ENCODE measurements at regions of chr10 and their contacts with region 1.

Region 1: DNA sequence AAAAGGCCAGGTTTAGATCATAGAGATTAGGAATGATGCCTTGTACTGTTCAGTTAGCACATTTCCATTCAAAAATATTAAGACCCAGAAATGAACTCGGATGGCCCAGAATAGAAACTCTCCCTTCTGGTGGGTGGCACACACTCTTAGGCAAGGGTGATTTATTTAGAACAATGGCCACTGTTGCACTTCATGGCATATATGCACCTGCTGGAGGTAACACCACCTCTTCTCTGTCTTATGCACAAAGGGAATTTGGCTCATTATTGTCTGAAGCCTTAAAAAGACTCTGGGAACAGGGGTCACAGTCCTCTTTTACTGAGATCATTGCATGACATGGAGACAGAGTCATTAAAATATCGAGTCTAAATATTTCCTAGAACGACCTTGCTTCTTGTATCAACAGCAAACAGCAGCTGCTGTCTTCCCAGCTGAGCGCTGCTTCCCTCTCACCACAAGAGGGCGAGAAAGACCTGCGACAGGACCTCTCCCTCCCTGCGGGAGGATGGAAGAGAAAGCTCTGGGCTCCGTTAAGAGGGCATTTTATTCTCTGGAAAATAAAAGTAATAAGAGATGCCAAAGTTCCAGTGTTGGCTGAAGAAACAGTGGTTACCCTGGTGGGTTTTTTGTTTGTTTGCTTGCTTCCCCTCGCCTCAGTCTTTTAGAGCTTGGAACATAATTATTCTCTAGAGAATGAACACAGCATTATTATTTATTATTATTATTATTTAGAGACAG is 13.6 kb upstream of the BAMBI start:
- DNase-seq: peak; percentile 77 to 89 (median 88)
- ATAC-seq: peak; percentile 90 to 92
- H3K4me3 ChIP-seq: no peak overlapping the region
- H3K27ac ChIP-seq: no peak overlapping the region
- H3K4me1 ChIP-seq: no peaks in the 10 kb centered on the region
- H3K27me3 ChIP-seq: no peaks in the 10 kb centered on the region

Region 2: GRCh38 chr10:28875549-28876081 is 211.9 kb after region 1 on chr10:
- intact Hi-C with region 1: no loop called
- DNase-seq: no peak
- ATAC-seq: no peak
- H3K4me3 ChIP-seq: no peak overlapping the region
- H3K27ac ChIP-seq: no peak overlapping the region
- H3K4me1 ChIP-seq: peaks cover 1% of the 10 kb centered on the region
- H3K27me3 ChIP-seq: no peaks in the 10 kb centered on the region

Region 3: GRCh38 chr10:29131952-29132820 is 468.4 kb after region 1 on chr10:
- intact Hi-C with region 1: loop called in 2 of 4 experiments (anchors 5 kb)
- DNase-seq: peak; percentile 67 to 85 (median 80)
- ATAC-seq: peak; percentile 90 to 96
- H3K4me3 ChIP-seq: no peak overlapping the region
- H3K27ac ChIP-seq: peak overlapping the region; percentile 42
- H3K4me1 ChIP-seq: peaks cover 6% of the 10 kb centered on the region
- H3K27me3 ChIP-seq: no peaks in the 10 kb centered on the region